ENCODE measurements at regions of chrX and their contacts with region 1.

Region 1: DNA sequence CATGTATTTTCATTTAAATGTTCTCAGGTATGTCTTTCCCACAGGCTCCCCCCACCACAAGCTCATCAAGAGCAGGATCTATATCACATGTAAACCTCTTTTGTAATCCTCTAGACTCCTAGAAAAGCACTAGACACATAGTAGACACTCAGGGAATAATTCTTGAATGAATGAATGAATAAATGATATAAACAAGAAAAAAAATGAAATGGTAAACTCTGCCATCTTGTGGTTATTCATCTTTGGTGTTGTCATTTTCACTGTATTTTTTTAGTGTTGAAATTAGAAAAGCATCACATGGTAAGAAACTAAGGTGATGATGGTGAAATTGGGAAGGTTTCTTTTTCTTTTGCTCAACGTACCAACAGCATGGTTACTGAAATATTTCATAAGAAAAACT is 34.2 kb upstream of the C1GALT1C1 start:
- DNase-seq: no peak
- H3K4me3 ChIP-seq: no peak overlapping the region
- H3K27ac ChIP-seq: no peak overlapping the region
- H3K4me1 ChIP-seq: no peaks in the 10 kb centered on the region
- H3K27me3 ChIP-seq: no peaks in the 10 kb centered on the region
- CTCF ChIP-seq: peak; percentile 63
- EP300 ChIP-seq: no peak
- RAD21 ChIP-seq: peak; percentile 48; the same call in 1 of the 2 replicates

Region 2: GRCh38 chrX:120485638-120486520 is 178.2 kb before region 1 on chrX:
- CTCF ChIA-PET with region 1: interaction called, 10 read pairs
- POLR2A ChIA-PET with region 1: no interaction called
- DNase-seq: peak; percentile 65
- H3K4me3 ChIP-seq: peak overlapping the region; percentile 46 to 69
- H3K27ac ChIP-seq: peak overlapping the region; percentile 65 to 70
- H3K4me1 ChIP-seq: no peaks in the 10 kb centered on the region; a peak in 1 of 4 replicates
- H3K27me3 ChIP-seq: peaks cover 4% of the 10 kb centered on the region; the same call in 1 of the 2 replicates
- CTCF ChIP-seq: peak; percentile 67
- EP300 ChIP-seq: peak in 1 of 2 experiments; percentile 47; a peak in 1 of 4 replicates
- RAD21 ChIP-seq: no peak; the same call in 1 of the 2 replicates

Region 3: GRCh38 chrX:120499301-120500072 is 164.6 kb before region 1 on chrX:
- CTCF ChIA-PET with region 1: interaction called, 15 read pairs
- POLR2A ChIA-PET with region 1: no interaction called
- DNase-seq: no peak
- H3K4me3 ChIP-seq: no peak overlapping the region
- H3K27ac ChIP-seq: no peak overlapping the region
- H3K4me1 ChIP-seq: no peaks in the 10 kb centered on the region
- H3K27me3 ChIP-seq: peaks cover 5% of the 10 kb centered on the region; the same call in 1 of the 2 replicates
- CTCF ChIP-seq: no peak
- EP300 ChIP-seq: no peak
- RAD21 ChIP-seq: no peak

Region 4: DNA sequence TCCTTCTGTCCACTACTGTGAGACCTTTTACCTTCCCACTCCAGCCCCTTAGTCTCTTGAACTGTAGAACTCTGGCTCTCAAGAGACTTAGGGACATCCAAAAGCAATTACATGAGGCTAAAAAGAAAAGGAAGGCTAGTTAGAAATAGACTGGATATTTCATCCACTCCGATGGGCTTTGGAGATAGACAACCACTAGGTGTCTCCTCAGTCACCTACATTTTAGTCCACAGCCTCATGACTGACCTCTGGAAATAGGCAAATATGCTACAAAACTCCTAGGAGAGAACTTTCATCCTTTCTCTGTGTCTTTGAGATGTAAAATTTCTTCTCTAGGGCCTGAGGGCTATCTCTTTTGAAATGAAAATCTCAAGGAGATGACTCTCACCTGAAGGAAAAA is 149.8 kb before region 1 on chrX:
- CTCF ChIA-PET with region 1: interaction called, 15 read pairs
- POLR2A ChIA-PET with region 1: no interaction called
- DNase-seq: peak; percentile 33
- H3K4me3 ChIP-seq: no peak overlapping the region
- H3K27ac ChIP-seq: no peak overlapping the region
- H3K4me1 ChIP-seq: no peaks in the 10 kb centered on the region
- H3K27me3 ChIP-seq: no peaks in the 10 kb centered on the region; the same call in 1 of the 2 replicates
- CTCF ChIP-seq: peak; percentile 65
- EP300 ChIP-seq: no peak
- RAD21 ChIP-seq: peak; percentile 66

Region 5: GRCh38 chrX:120568035-120568434 is 96.0 kb before region 1 on chrX:
- CTCF ChIA-PET with region 1: no interaction called
- POLR2A ChIA-PET with region 1: no interaction called
- DNase-seq: no peak
- H3K4me3 ChIP-seq: no peak overlapping the region
- H3K27ac ChIP-seq: no peak overlapping the region
- H3K4me1 ChIP-seq: no peaks in the 10 kb centered on the region
- H3K27me3 ChIP-seq: peaks cover 4% of the 10 kb centered on the region; the same call in 1 of the 2 replicates
- CTCF ChIP-seq: no peak
- EP300 ChIP-seq: no peak
- RAD21 ChIP-seq: no peak